Gastrocnemius medialis (tissue), 4 donors: ENCODE measurements at regions of chr3 and their contacts with region 1.

Region 1: DNA sequence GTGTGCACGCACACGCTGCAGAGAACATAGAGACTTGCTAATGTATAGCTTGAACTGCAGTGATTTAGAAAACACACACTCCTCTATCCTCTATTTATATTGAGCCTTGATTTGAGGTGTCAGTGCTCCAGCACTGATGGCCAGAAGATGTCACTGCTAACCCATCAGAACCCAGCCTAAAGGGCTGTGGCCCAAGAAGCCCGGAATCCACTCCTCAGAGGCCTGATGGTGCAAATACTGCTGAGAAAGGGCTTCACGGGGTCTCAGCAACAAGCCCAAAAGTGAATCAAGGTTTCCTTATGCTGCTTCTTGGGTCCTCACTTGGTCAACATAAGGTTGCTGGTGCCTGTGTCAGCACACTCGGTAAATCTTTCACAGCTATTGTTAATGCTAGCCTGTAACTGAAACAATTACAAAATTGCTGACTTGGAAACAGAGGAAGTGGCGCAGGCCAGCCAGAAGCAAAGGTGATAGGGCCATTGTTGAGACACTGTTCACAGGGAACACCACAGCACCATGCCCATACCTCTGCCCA is 60.3 kb downstream of the HEG1 start:
- DNase-seq: peak; percentile 41 to 56
- ATAC-seq: peak; percentile 85 to 93
- H3K4me3 ChIP-seq: no peak overlapping the region
- H3K27ac ChIP-seq: peak overlapping the region in 2 of 4 donors; percentile 32 to 45
- H3K4me1 ChIP-seq: peaks cover 3 to 30% of the 10 kb centered on the region in 2 donors
- H3K27me3 ChIP-seq: no peaks in the 10 kb centered on the region
- CTCF ChIP-seq: peak; percentile 64 to 85 (median 77)
- POLR2A ChIP-seq: no peak

Region 2: DNA sequence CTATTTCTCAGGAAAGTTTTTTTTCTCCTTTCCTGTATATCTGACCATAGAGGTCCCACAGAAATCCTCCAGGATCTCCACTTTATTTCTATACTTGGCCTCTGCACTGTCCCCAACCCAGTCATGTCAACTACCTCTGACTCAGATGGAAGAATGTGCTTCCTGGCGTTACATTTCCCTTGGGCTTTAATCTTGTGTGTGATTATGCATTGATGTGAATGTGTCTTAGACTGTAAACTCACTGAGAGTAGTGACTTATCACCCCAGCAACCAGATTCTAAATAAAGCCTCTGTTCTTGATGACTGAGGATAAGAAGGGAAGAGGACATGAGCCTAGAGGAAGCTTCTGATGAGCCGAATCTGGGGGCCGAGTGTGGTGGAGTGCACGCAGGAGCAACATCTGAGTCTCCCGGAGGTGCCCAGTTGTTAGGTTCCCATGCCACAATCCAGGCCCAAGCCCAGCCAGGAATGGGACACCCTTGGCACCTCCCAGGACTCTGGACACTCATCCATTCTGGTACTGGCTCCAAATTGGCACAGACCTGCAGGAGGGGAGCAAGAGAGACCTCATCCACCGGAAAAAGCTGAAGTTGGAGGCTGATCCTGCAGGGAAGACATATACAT is 92.4 kb after region 1 on chr3:
- in situ Hi-C with region 1: no loop called
- intact Hi-C with region 1: no loop called
- DNase-seq: no peak
- ATAC-seq: peak in 1 of 2 donors; percentile 65
- H3K4me3 ChIP-seq: no peak overlapping the region
- H3K27ac ChIP-seq: no peak overlapping the region
- H3K4me1 ChIP-seq: peaks cover 8 to 9% of the 10 kb centered on the region in 2 donors
- H3K27me3 ChIP-seq: no peaks in the 10 kb centered on the region
- CTCF ChIP-seq: no peak
- POLR2A ChIP-seq: no peak

Region 3: DNA sequence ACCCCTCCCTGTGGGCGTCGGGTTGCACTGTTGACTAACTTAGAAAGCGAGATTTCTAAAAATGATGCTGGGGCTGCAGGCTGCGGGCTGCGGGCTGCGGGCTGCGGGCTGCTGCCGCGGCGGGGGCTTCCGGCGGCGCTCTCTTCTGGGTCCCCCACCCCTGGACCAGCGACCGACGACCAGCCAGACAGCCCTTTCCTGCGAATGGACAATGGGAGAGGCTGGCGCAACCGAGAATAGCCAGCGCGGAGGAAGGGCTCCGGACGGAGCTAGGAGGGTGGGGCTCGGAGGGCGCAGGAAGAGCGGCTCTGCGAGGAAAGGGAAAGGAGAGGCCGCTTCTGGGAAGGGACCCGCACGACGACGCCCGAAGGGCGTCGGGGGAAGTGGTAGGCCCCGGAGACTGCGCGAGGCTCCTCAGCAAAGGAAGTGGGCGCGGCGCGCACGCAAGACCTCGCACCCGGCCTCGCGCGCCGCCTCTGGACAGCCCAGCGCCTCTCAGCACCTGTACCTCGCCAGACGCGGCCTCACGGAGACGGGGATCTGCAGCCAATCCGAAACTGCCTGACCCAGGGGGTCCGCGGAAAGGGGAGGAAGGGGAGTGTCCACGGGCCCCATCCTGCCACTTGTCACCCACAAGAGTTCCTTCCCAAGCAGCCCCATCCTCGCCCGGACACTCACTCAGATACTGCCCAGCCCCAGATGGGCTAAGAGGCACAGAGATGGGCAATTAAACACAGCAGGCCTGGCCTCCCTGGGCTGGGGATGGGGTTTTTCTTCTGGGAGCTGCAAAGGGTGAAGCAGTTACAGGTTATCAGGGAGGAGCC is 146.3 kb after region 1 on chr3:
- in situ Hi-C with region 1: no loop called
- intact Hi-C with region 1: loop called (anchors 5 kb)
- DNase-seq: peak; percentile 24 to 33
- ATAC-seq: peak; percentile 37
- H3K4me3 ChIP-seq: peak overlapping the region; percentile 40 to 63 (median 47)
- H3K27ac ChIP-seq: peak overlapping the region; percentile 6 to 62 (median 28)
- H3K4me1 ChIP-seq: peaks cover 9 to 37% of the 10 kb centered on the region in 2 donors
- H3K27me3 ChIP-seq: no peaks in the 10 kb centered on the region
- CTCF ChIP-seq: peak in 3 of 5 experiments; percentile 11 to 38 (median 17)
- POLR2A ChIP-seq: no peak

Region 4: DNA sequence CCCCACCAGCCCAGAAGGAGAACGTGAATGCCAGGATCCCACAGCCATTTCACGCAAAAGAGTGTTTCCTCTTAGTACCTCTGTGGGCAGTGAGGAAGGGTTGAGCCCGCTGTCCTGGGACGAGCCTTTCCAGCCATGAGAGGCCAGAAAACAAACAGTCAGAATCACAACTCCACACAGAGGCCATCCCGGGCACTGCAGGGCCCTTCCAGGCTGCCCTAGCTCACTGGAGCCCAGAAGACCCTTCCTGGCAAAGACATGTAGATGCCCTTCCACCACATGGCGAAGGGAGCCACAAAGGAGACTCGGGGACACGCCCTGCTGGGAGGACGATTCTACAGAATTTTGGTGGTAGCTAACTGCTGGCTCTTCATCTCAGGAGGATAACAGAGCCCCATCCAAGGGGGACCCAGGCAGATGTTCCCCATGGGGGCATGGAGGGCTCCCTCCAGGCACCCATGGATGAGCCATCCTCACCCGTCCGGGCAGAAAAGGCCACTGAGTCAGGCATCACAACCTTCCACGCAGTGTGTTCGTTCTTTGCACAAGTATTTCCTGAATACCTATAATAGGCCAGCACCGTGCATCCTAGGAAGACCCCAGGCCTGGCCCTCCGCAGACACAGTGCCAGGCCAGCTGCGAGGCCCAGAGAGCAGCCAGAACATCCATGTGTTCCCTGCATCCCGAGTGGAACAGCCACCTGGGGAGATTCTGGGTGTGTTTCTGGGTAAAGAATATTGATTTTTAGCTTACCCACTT is 169.8 kb after region 1 on chr3:
- in situ Hi-C with region 1: loop called in 3 of 4 experiments (anchors 5 to 10 kb)
- intact Hi-C with region 1: loop called (anchors 1 kb)
- DNase-seq: no peak
- ATAC-seq: peak in 1 of 2 donors; percentile 82
- H3K4me3 ChIP-seq: no peak overlapping the region
- H3K27ac ChIP-seq: no peak overlapping the region
- H3K4me1 ChIP-seq: no peaks in the 10 kb centered on the region
- H3K27me3 ChIP-seq: no peaks in the 10 kb centered on the region
- CTCF ChIP-seq: peak; percentile 36 to 70 (median 65)
- POLR2A ChIP-seq: no peak

Region 5: DNA sequence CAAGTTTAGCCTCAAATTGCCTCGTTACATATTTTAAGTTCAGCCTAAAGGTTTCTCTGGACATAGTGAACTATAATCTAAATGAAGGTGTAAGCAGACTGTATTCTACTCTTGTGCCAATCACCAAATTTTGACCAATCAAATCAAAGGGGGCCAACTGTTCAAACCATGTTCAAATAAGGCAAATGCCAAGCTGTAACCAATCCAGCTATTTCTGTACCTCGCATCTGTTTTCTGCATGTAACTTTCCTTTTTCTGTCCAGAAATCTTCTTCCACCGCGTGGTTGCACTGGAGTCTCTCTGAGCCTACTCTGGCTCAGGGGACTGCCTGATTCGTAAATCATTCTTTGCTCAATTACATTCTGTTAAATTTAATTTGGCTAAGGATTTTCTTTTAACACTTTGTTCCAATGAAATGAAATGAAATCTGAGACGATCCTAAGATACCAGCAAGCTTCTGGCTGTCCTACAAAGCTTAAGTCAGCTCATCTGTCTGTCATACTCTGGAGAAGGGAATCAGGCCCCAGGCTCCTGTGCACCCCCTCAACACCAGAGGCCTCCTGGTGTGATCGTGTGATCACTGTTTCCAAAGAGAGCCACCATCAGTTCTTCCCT is 432.8 kb after region 1 on chr3:
- in situ Hi-C with region 1: loop called in 2 of 4 experiments (anchors 5 to 10 kb)
- intact Hi-C with region 1: no loop called
- DNase-seq: no peak
- ATAC-seq: no peak
- H3K4me3 ChIP-seq: no peak overlapping the region
- H3K27ac ChIP-seq: no peak overlapping the region
- H3K4me1 ChIP-seq: no peaks in the 10 kb centered on the region
- H3K27me3 ChIP-seq: no peaks in the 10 kb centered on the region
- CTCF ChIP-seq: no peak
- POLR2A ChIP-seq: no peak

Region 6: DNA sequence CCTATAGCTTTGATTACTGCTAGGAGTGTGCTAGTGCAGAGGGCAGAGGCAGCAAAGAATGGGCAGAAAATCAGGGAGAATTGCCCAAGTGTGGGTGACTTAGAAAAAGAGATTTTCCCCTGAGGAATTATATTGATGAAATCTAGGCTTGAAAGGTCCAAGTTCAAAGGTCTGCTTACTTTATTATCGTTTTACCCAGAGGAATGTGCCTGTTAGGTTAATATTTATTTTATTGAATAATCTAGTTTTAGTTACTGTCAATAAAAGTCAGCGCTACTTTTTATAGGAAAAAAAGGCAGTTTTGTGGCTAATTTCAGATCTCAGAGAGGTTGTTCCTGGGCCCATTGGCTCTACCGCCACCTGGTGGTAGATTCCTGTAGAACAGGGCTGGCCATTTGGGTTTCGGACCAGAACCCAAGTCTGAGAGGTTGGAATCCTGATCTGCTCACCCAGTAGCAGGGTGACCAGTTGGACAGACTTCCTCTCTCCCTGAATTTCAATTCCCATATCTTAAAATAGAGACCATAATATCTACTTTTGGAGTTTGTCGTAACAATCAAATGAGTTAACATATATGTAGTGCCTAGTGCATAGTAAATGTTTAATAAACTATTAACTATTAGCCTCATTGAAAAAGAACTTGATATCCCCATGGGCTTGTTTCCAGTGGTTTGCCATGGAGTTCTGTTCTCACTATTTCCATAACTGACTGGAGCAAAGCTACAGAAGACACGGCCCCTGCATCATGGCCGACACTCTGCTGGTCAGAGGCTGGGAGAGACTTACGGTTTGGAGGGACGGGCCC is 442.3 kb after region 1 on chr3:
- in situ Hi-C with region 1: loop called in 3 of 4 experiments (anchors 5 to 10 kb)
- intact Hi-C with region 1: loop called (anchors 1 kb)
- DNase-seq: peak; percentile 5 to 18
- ATAC-seq: peak in 1 of 2 donors; percentile 53
- H3K4me3 ChIP-seq: no peak overlapping the region
- H3K27ac ChIP-seq: no peak overlapping the region
- H3K4me1 ChIP-seq: no peaks in the 10 kb centered on the region
- H3K27me3 ChIP-seq: no peaks in the 10 kb centered on the region
- CTCF ChIP-seq: peak; percentile 84 to 97 (median 89)
- POLR2A ChIP-seq: no peak

Region 7: DNA sequence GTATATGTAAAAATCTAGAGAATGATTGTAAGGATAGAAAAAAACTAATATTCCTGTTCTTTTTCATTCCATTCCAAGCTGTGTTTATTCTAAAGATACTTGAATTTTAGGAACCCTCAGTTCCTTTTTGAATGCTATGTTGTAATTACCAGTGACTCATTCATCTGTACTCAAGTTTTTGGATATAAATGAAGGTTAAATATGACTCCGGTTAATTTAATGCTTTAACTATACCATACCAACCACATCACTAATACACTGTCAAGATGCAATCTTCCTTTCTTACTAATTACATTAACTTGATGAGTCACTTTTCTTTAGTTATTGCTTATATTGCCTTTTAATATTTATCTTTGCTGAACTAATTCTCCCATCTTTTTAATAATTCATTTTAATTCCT is 448.4 kb after region 1 on chr3:
- in situ Hi-C with region 1: loop called in 3 of 4 experiments (anchors 5 to 10 kb)
- intact Hi-C with region 1: no loop called
- DNase-seq: no peak
- ATAC-seq: no peak
- H3K4me3 ChIP-seq: no peak overlapping the region
- H3K27ac ChIP-seq: no peak overlapping the region
- H3K4me1 ChIP-seq: no peaks in the 10 kb centered on the region
- H3K27me3 ChIP-seq: no peaks in the 10 kb centered on the region
- CTCF ChIP-seq: no peak
- POLR2A ChIP-seq: no peak